ENCODE measurements at regions of chr20 and their contacts with region 1.

Region 1: GRCh38 chr20:47150403-47151152 is 205.9 kb downstream of the ZMYND8 start:
- DNase-seq: peak; percentile 64
- H3K4me3 ChIP-seq: no peak overlapping the region
- H3K27ac ChIP-seq: no peak overlapping the region
- H3K4me1 ChIP-seq: no peaks in the 10 kb centered on the region
- H3K27me3 ChIP-seq: no peaks in the 10 kb centered on the region
- CTCF ChIP-seq: peak; percentile 57 to 72
- POLR2A ChIP-seq: no peak

Region 2: DNA sequence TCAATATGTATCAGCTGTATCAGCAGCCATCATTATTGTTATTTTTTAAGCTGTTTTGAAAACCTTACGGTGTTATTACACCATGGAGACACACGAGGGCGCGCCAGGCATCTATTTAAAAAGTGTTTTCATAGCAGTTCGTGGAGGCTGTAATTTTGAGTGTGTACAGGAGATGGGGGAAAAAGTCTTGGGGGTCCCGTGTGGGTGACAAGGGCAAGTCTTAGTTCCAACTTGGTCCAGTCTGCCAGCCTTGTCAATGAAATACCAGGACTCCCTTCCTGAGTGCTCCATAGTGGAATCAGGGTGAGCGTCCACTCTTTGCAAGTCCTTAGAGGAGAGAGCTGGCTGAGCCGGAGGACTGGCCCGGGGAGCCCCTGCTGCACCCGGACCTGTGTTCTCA is 397.9 kb before region 1 on chr20:
- CTCF ChIA-PET with region 1: interaction called, 6 read pairs
- POLR2A ChIA-PET with region 1: no interaction called
- dilution Hi-C with region 1: no loop called
- intact Hi-C with region 1: loop called (anchors 1 kb)
- DNase-seq: peak; percentile 62
- H3K4me3 ChIP-seq: no peak overlapping the region
- H3K27ac ChIP-seq: no peak overlapping the region
- H3K4me1 ChIP-seq: no peaks in the 10 kb centered on the region
- H3K27me3 ChIP-seq: peaks cover 0 to under 1% of the 10 kb centered on the region in 2 experiments
- CTCF ChIP-seq: peak; percentile 57 to 61
- POLR2A ChIP-seq: no peak

Region 3: GRCh38 chr20:46757754-46758678 is 392.6 kb before region 1 on chr20:
- CTCF ChIA-PET with region 1: interaction called, 6 read pairs
- POLR2A ChIA-PET with region 1: no interaction called
- dilution Hi-C with region 1: no loop called
- intact Hi-C with region 1: loop called (anchors 1 kb)
- DNase-seq: peak; percentile 42
- H3K4me3 ChIP-seq: no peak overlapping the region
- H3K27ac ChIP-seq: no peak overlapping the region
- H3K4me1 ChIP-seq: no peaks in the 10 kb centered on the region
- H3K27me3 ChIP-seq: no peaks in the 10 kb centered on the region
- CTCF ChIP-seq: peak; percentile 83
- POLR2A ChIP-seq: no peak

Region 4: GRCh38 chr20:46767127-46767761 is 383.3 kb before region 1 on chr20:
- CTCF ChIA-PET with region 1: no interaction called
- POLR2A ChIA-PET with region 1: no interaction called
- dilution Hi-C with region 1: no loop called
- intact Hi-C with region 1: loop called (anchors 1 kb)
- DNase-seq: peak; percentile 25
- H3K4me3 ChIP-seq: no peak overlapping the region
- H3K27ac ChIP-seq: no peak overlapping the region
- H3K4me1 ChIP-seq: no peaks in the 10 kb centered on the region
- H3K27me3 ChIP-seq: peaks cover 0 to 2% of the 10 kb centered on the region in 2 experiments
- CTCF ChIP-seq: peak; percentile 60 to 64
- POLR2A ChIP-seq: no peak

Region 5: GRCh38 chr20:47370850-47371676 is 220.5 kb after region 1 on chr20:
- CTCF ChIA-PET with region 1: no interaction called
- POLR2A ChIA-PET with region 1: no interaction called
- dilution Hi-C with region 1: no loop called
- intact Hi-C with region 1: no loop called
- DNase-seq: no peak
- H3K4me3 ChIP-seq: no peak overlapping the region
- H3K27ac ChIP-seq: no peak overlapping the region
- H3K4me1 ChIP-seq: no peaks in the 10 kb centered on the region
- H3K27me3 ChIP-seq: no peaks in the 10 kb centered on the region
- CTCF ChIP-seq: no peak
- POLR2A ChIP-seq: no peak